ENCODE measurements at regions of chr12 and their contacts with region 1.

Region 1: DNA sequence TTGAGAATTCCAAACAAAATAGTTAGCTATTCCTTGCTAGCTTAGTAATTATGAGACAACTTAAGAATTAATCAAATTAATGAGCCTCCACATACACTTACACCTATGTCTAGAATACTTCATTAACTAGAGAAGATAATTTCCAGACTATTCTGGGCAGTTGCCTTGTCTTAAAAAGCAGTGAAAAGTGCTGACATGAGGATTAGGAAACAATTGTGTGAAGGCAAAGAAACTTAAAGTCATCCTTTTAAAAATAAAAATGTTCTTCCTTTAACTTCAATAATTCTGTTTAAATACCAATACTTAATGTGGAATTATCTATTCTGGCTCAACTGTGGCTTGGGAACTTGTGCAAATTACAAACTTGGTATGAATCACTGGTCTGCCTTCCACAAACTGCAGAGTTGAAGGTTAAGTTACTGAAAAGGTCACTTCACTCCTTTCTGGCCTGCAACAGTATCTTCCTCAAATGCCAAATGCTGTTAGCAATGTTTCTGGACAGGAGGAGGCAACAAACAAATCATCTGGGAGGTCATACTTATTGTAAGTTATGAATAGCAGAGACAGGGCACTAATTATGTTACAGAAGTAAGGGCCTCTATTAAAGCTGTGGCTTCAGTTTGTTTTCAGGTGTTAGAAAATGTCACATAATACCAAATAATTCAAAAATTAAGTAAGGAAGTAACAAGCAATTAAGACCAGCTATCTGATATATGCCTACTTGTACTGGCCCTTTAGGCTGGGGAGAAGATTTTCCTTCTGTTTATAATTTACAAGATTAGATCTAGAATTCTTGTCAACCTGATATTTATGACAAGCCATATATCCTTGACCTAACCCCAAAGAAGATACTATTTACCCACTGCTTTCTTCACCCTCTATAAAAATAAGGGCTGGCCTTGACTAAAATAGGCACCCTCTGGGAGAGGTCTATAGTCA is 19.1 kb downstream of the PPTC7 start:
- DNase-seq: no peak
- H3K4me3 Mint-ChIP-seq: peak overlapping the region; percentile 41
- H3K27ac Mint-ChIP-seq: peak overlapping the region; percentile 80
- H3K4me1 Mint-ChIP-seq: peaks cover 37% of the 10 kb centered on the region
- H3K27me3 Mint-ChIP-seq: no peaks in the 10 kb centered on the region
- CTCF ChIP-seq: no peak

Region 2: DNA sequence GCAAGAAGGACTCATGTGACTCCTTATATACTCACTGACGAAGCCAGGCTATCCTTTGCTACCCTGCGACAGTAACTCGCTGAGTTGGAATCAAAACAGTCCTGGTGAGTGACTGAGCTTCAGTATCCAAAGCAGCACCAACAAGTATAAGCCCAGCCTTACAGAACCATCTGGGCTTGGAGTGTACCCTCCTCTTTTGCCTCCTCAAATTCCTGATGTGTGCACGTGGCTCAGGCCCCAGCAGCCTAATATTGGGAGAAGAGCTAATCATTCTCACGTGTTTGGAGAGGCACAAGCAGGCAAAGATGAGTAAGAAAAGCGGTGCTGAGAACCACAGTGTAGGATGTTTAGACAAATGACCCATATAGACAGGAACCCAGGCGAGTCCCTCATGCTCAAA is 15.3 kb before region 1 on chr12:
- CTCF ChIA-PET with region 1: interaction called, 14 read pairs
- POLR2A ChIA-PET with region 1: interaction called, 36 read pairs
- intact Hi-C with region 1: no loop called
- DNase-seq: no peak
- H3K4me3 Mint-ChIP-seq: peak overlapping the region; percentile 66
- H3K27ac Mint-ChIP-seq: peak overlapping the region; percentile 85
- H3K4me1 Mint-ChIP-seq: peaks cover 62% of the 10 kb centered on the region
- H3K27me3 Mint-ChIP-seq: no peaks in the 10 kb centered on the region
- CTCF ChIP-seq: no peak